Caco-2 (cell line): ENCODE measurements at regions of chr11 and their contacts with region 1.

Region 1: DNA sequence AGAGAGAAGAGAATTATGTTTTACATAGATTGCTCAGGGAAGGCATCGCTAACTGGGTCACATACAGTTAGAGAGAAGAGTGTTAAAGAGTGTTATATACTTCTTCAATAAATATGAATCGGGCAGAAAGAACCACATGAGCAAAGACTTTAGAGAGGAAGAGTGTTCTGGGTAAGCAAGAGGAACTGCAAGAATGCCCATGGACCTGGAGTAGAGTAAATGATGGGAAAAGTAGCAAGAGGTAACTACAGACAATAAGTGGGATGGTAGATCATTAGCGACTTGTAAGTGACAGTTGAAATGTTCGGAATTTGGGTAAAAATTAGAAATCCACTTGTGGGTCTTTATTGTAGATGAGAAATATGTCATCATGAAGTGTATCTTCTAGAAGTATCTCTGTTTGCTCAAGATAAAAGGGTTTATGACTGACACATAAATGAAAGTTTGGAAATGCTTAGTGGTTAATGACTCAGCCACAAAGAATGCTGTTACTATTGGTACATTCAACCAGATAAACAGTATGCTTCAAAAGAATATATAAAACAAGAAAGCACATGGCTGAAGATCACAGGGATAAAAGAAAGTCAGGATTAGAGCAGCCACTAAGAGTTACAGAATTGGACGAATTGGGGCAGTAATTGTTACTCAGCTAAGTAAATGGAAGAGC is 229.3 kb downstream of the CASP12 start:
- DNase-seq: peak in 1 of 2 experiments; percentile 82
- H3K4me3 ChIP-seq: no peak overlapping the region
- H3K4me3 Mint-ChIP-seq: peak overlapping the region; percentile 20
- H3K27ac Mint-ChIP-seq: peak overlapping the region; percentile 74
- H3K4me1 ChIP-seq: peaks cover 47% of the 10 kb centered on the region
- H3K4me1 Mint-ChIP-seq: peaks cover 51% of the 10 kb centered on the region
- H3K27me3 ChIP-seq: no peaks in the 10 kb centered on the region
- H3K27me3 Mint-ChIP-seq: no peaks in the 10 kb centered on the region
- CTCF ChIP-seq: no peak

Region 2: DNA sequence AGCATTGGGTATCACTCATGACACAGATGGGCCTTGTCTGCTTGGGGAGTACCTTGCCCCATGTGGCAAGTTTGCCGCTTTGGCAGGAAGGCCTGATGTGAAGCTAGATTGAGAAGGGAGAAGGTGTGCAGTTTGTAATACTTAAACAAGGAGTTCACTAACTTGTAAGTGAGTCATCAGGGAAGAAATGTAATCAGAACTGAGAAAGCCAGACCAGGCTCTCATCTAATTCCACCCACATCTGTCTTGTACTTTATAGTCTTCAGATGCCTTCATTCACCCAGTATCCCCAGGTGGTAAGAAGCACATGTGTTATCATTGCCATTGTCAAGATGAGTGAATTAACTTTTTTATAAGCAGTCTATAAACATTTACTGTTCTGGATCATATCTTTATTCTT is 748.5 kb before region 1 on chr11:
- CTCF ChIA-PET with region 1: no interaction called
- POLR2A ChIA-PET with region 1: no interaction called
- intact Hi-C with region 1: loop called (anchors 1 kb)
- DNase-seq: no peak
- H3K4me3 ChIP-seq: no peak overlapping the region
- H3K4me3 Mint-ChIP-seq: no peak overlapping the region
- H3K27ac Mint-ChIP-seq: no peak overlapping the region
- H3K4me1 ChIP-seq: peaks cover 49% of the 10 kb centered on the region
- H3K4me1 Mint-ChIP-seq: peaks cover 33% of the 10 kb centered on the region
- H3K27me3 ChIP-seq: no peaks in the 10 kb centered on the region
- H3K27me3 Mint-ChIP-seq: peaks cover 4% of the 10 kb centered on the region
- CTCF ChIP-seq: no peak

Region 3: GRCh38 chr11:104634336-104634735 is 34.6 kb before region 1 on chr11:
- CTCF ChIA-PET with region 1: no interaction called
- POLR2A ChIA-PET with region 1: no interaction called
- intact Hi-C with region 1: loop called (anchors 1 kb)
- DNase-seq: peak; percentile 48 to 56
- H3K4me3 ChIP-seq: no peak overlapping the region
- H3K4me3 Mint-ChIP-seq: peak overlapping the region; percentile 51
- H3K27ac Mint-ChIP-seq: peak overlapping the region; percentile 64
- H3K4me1 ChIP-seq: peaks cover 34% of the 10 kb centered on the region
- H3K4me1 Mint-ChIP-seq: peaks cover 40% of the 10 kb centered on the region
- H3K27me3 ChIP-seq: no peaks in the 10 kb centered on the region
- H3K27me3 Mint-ChIP-seq: no peaks in the 10 kb centered on the region
- CTCF ChIP-seq: no peak

Region 4: DNA sequence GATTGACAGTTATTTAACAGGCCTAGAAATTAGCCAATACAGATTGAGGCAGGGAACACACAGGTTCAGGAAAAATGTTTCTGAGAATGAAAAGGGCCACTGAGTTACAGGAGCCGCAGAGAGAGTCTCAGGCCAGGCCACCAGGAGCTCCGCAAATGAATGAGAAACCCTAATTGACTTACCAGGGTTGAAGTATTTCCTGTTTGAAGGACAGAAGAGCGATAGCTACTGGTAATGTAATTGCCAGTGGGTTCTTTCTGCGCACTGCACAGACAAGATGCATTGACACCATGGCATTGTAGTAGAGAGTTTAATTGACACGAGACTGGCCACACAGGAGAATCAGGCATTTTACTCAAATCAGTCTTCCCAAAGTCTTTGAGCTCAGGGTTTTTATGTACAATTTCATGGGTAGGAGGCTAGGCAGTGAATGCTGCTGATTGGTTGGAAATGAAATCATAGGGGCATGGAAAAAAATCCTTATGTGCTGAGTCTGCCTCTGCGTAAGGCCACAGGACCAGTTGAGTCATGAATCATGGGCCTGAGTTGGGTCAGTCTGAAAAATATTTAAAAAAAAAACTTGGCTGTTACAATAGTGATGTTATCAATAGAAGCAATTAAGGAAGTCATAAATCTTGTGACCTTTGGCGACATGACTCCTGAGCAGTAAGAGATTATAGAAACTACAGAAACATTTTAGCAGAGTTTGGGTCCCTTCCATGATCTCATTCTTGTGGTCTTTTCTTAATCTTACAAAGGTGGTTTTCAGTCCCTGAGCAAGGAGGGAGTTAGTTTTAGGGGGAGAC is 25.5 kb after region 1 on chr11:
- CTCF ChIA-PET with region 1: no interaction called
- POLR2A ChIA-PET with region 1: no interaction called
- intact Hi-C with region 1: loop called (anchors 1 kb)
- DNase-seq: peak in 1 of 2 experiments; percentile 12
- H3K4me3 ChIP-seq: no peak overlapping the region
- H3K4me3 Mint-ChIP-seq: no peak overlapping the region
- H3K27ac Mint-ChIP-seq: peak overlapping the region; percentile 8
- H3K4me1 ChIP-seq: peaks cover 16% of the 10 kb centered on the region
- H3K4me1 Mint-ChIP-seq: peaks cover 22% of the 10 kb centered on the region
- H3K27me3 ChIP-seq: no peaks in the 10 kb centered on the region
- H3K27me3 Mint-ChIP-seq: no peaks in the 10 kb centered on the region
- CTCF ChIP-seq: no peak

Region 5: DNA sequence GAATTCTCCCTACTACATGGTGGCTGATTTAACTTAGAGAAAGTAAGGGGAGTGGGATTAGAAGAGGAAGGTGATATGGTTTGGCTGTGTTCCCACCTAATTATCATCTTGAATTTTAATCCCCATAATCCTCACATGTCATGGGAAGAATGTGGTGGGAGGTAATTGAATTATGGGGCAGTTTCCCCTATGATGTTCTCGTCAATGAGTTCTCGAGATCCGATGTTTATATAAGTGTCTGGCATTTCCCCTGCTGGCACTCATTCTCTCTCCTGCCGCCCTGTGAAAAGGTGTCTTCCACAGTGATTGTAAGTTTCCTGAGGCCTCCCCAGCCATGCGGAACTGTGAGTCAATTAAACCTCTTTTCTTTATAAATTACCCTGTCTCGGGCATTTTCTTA is 60.0 kb after region 1 on chr11:
- CTCF ChIA-PET with region 1: no interaction called
- POLR2A ChIA-PET with region 1: no interaction called
- intact Hi-C with region 1: loop called (anchors 1 kb)
- DNase-seq: no peak
- H3K4me3 ChIP-seq: no peak overlapping the region
- H3K4me3 Mint-ChIP-seq: no peak overlapping the region
- H3K27ac Mint-ChIP-seq: no peak overlapping the region
- H3K4me1 ChIP-seq: peaks cover 17% of the 10 kb centered on the region
- H3K4me1 Mint-ChIP-seq: peaks cover 12% of the 10 kb centered on the region
- H3K27me3 ChIP-seq: no peaks in the 10 kb centered on the region
- H3K27me3 Mint-ChIP-seq: no peaks in the 10 kb centered on the region
- CTCF ChIP-seq: no peak

Region 6: DNA sequence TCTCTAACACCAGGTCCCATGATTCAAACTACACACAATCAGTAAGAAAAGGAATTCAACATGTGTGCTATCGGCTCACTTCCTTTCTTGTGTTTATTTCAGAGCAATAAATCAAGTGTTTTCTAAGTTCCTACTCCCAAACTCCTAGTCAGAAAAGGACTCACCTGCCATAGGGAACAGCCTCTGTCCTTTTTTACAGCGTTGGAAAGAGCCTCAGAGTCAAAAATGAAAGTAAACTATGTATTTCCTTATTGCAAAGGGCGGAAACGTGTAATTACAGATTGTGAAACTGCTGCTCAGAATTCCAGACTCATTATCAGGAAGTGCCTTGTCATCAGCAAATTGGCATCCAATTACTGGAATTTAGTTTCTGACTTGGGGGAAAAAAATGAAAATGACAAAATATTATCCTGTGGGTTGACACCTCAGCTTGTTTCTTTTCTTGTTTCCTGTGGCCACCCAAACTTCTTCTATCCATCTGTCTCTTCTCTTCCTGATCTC is 299.5 kb after region 1 on chr11 and contains the start of gene CASP4:
- CTCF ChIA-PET with region 1: no interaction called
- POLR2A ChIA-PET with region 1: no interaction called
- intact Hi-C with region 1: loop called (anchors 5 kb)
- DNase-seq: peak in 1 of 2 experiments; percentile 39
- H3K4me3 ChIP-seq: peak within 1 kb of the TSS; percentile 35
- H3K4me3 Mint-ChIP-seq: peak within 1 kb of the TSS; percentile 73
- H3K27ac Mint-ChIP-seq: peak within 1 kb of the TSS; percentile 85
- H3K4me1 ChIP-seq: peaks cover 30% of the 10 kb centered on the region
- H3K4me1 Mint-ChIP-seq: peaks cover 47% of the 10 kb centered on the region
- H3K27me3 ChIP-seq: no peaks in the 10 kb centered on the region
- H3K27me3 Mint-ChIP-seq: no peaks in the 10 kb centered on the region
- CTCF ChIP-seq: no peak
- total RNA-seq, gene CASP4: 41.7 and 42.0 TPM in 2 replicates

Region 7: DNA sequence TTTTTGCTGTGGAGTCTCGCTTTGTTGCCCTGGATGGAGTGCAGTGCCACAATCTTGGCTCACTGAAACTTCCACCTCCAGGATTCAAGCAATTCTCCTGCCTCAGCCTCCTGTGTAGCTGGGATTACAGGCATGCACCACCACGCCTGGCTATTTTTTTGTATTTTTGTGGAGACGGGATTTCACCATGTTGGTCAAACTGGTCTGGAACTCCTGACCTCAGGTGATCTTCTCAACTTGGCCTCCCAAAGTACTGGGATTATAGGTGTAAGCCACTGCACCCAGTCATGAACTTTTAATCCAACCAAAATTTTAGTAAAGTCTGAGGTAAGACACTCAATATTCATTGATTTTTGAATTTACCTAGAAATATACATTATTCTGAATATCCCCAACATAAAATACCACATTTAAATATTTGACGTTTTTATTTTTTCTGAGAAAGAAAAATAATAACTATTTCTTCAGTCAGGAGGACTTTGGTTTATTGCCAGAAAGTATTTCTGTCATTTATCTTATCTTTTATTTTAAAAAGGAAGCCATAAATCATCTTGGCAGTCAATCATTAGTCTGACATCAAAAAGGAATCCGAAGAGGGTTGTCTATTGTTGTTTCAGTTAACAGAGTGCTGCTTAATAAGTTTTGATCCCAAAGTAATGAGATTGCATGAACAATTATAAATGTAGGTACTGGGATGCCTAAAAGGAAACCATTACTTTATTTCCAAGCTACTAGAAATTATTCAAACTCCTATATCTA is 838.7 kb after region 1 on chr11:
- CTCF ChIA-PET with region 1: no interaction called
- POLR2A ChIA-PET with region 1: no interaction called
- intact Hi-C with region 1: loop called (anchors 1 kb)
- DNase-seq: peak; percentile 82 to 87
- H3K4me3 ChIP-seq: no peak overlapping the region
- H3K4me3 Mint-ChIP-seq: peak overlapping the region; percentile 43
- H3K27ac Mint-ChIP-seq: peak overlapping the region; percentile 59
- H3K4me1 ChIP-seq: peaks cover 37% of the 10 kb centered on the region
- H3K4me1 Mint-ChIP-seq: peaks cover 17% of the 10 kb centered on the region
- H3K27me3 ChIP-seq: no peaks in the 10 kb centered on the region
- H3K27me3 Mint-ChIP-seq: no peaks in the 10 kb centered on the region
- CTCF ChIP-seq: no peak